Pancreas (tissue), 10 donors: ENCODE measurements at regions of chr17 and their contacts with region 1.

Region 1: DNA sequence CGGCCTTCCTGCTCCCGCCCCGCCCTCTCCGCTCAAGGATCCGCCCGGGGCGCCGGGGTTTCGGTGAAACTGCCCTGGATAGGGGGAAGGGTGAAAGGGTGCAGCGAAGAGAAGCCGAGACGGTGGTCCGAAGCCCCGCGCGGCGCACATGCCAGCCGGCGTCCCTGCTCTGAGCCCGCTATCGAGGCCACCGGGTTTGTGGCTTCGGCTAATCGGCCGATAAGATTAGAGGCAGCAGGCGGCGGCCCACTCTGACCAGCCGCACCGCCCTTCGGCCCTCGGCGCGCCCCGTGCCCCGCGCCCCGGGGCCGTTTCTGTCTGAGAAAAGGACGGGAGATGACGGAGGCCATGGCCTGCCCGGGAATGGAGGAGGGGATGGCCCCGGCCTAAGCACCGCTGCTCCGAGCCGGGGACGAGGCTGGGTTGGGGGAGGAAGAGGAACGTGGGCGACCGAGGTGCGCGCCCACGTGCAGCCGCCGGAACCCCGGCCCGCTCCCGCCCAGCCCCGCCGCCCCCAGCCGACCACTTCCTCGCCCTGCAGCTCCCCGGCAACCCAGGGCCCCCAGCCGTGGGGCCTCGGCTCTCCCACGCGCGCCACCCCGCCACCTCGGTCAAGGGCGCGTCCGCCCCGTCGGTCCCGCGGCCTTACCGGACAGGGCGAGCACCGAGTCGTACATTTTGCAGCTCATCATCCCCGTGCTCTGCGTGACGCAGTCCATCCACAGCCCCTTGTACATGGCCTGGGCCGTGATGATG is 928 bp downstream of the CLDN7 start:
- DNase-seq: peak; percentile 82 to 94 (median 87)
- ATAC-seq: peak; percentile 11 to 72 (median 68)
- H3K4me3 ChIP-seq: peak overlapping the region; percentile 50 to 83 (median 74)
- H3K27ac ChIP-seq: peak overlapping the region; percentile 97 to 99 (median 98)
- H3K4me1 ChIP-seq: peaks cover 0 to 9% (median 6%) of the 10 kb centered on the region in 3 donors
- H3K27me3 ChIP-seq: no peaks in the 10 kb centered on the region
- CTCF ChIP-seq: no peak

Region 2: GRCh38 chr17:7314719-7315569 is 53.6 kb after region 1 on chr17 and contains the start of gene GPS2:
- intact Hi-C with region 1: loop called in 1 of 3 experiments (anchors 10 kb)
- DNase-seq: peak; percentile 90 to 98 (median 92)
- ATAC-seq: peak; percentile 91 to 94 (median 94)
- H3K4me3 ChIP-seq: peak within 1 kb of the TSS; percentile 71 to 93 (median 92)
- H3K27ac ChIP-seq: peak within 1 kb of the TSS; percentile 82 to 91 (median 88)
- H3K4me1 ChIP-seq: peaks cover 15 to 30% (median 24%) of the 10 kb centered on the region in 3 donors
- H3K27me3 ChIP-seq: no peaks in the 10 kb centered on the region
- CTCF ChIP-seq: no peak
- total RNA-seq, gene GPS2: 22.1 to 33.5 (median 27.6) TPM